GM10248 (cell line): ENCODE measurements at regions of chr12 and their contacts with region 1.

Region 1: DNA sequence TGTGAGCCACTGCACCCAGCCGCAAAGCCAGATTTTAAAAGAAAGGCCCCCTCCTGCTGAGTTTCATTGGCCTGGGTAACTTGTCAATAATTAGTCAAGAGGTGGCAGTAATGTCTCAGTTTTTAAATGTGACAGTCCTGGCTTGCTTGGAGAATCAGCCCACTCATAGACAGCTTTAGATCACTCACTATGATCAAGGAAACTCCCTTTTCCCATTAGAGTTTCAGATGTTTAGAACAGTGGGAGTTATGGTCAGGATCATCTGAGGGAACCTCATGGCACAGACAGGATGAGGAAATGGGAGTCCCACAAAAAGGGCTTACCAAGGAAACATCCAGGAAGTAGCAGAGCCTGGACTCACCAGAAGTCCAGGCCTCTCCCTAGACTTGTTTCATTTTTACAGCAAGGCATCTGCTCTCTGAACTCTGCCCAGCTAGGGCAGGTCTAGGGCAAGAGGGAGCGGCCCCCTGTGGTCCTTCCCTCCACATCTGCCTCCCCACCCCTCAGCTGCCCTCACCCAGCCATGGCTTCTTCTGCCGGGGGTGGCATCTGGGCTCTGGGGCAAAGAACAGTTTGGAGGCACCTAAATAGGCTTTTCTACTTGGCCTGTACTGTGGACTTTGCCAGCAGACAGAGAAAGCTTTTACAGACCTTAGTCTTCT is 11.2 kb downstream of the BCL2L14 start:
- DNase-seq: peak; percentile 73
- CTCF ChIP-seq: peak; percentile 52

Region 2: GRCh38 chr12:12070674-12071656 is 11.0 kb before region 1 on chr12 and contains the start of gene BCL2L14:
- CTCF ChIA-PET with region 1: interaction called, 18 read pairs
- POLR2A ChIA-PET with region 1: no interaction called
- DNase-seq: peak; percentile 58
- CTCF ChIP-seq: no peak

Region 3: GRCh38 chr12:12327802-12328201 is 245.8 kb after region 1 on chr12:
- CTCF ChIA-PET with region 1: interaction called, 78 read pairs
- POLR2A ChIA-PET with region 1: no interaction called
- DNase-seq: peak; percentile 65
- CTCF ChIP-seq: peak; percentile 74

Region 4: GRCh38 chr12:12334367-12335040 is 252.5 kb after region 1 on chr12:
- CTCF ChIA-PET with region 1: interaction called, 78 read pairs
- POLR2A ChIA-PET with region 1: no interaction called
- DNase-seq: peak; percentile 80
- CTCF ChIP-seq: peak; percentile 71